ENCODE measurements at regions of chr4 and their contacts with region 1.

Region 1: GRCh38 chr4:139015269-139015947 is at the start of gene NOCT:
- DNase-seq: peak; percentile 75 to 98 (median 86)
- ATAC-seq: peak; percentile 90
- H3K4me3 ChIP-seq: peak within 1 kb of the TSS; percentile 74
- H3K4me3 Mint-ChIP-seq: peak within 1 kb of the TSS; percentile 93
- H3K27ac ChIP-seq: peak within 1 kb of the TSS; percentile 78 to 87
- H3K27ac Mint-ChIP-seq: peak within 1 kb of the TSS; percentile 95
- H3K4me1 ChIP-seq: peaks cover 20% of the 10 kb centered on the region
- H3K4me1 Mint-ChIP-seq: peaks cover 26% of the 10 kb centered on the region
- H3K27me3 ChIP-seq: no peaks in the 10 kb centered on the region
- H3K27me3 Mint-ChIP-seq: no peaks in the 10 kb centered on the region
- CTCF ChIP-seq: no peak
- total RNA-seq, gene NOCT: 13.7 to 15.8 TPM

Region 2: DNA sequence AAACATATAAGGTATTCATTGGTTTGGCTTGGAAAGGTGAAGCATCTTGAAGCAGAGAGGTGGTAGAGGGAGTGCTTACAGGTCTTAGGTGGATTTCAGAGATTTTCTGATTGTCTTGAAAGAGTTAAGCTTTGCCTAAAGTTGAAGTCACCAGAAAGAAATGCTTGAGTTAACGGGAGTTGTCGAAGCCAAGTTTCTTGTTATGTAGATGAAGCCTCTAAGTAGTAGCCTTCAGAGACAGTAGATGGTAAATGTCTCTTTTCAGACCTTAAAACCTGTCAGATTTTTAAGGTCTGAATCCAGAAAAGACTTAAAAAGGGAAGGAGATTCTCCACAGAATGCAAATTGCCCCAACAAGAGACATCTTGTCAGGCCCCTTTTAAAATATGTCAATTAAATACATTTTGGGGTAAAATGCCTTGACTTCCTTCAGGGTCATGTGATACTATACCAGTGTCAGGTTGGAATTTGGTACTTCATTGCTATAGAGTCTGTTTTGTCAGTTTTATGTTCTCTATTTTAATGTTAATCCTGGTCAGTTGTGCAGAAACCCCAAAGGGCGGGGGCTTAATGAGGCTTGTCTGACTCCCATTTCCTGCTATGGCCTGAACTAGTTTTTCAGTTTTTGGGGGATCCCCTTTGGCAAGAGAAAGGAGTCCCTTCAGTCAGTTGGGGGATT is 1564.1 kb before region 1 on chr4:
- CTCF ChIA-PET with region 1: no interaction called
- POLR2A ChIA-PET with region 1: no interaction called
- intact Hi-C with region 1: no loop called
- DNase-seq: no peak
- ATAC-seq: no peak
- H3K4me3 ChIP-seq: no peak overlapping the region
- H3K4me3 Mint-ChIP-seq: no peak overlapping the region
- H3K27ac ChIP-seq: no peak overlapping the region
- H3K27ac Mint-ChIP-seq: no peak overlapping the region
- H3K4me1 ChIP-seq: no peaks in the 10 kb centered on the region
- H3K4me1 Mint-ChIP-seq: no peaks in the 10 kb centered on the region
- H3K27me3 ChIP-seq: no peaks in the 10 kb centered on the region
- H3K27me3 Mint-ChIP-seq: no peaks in the 10 kb centered on the region
- CTCF ChIP-seq: no peak

Region 3: DNA sequence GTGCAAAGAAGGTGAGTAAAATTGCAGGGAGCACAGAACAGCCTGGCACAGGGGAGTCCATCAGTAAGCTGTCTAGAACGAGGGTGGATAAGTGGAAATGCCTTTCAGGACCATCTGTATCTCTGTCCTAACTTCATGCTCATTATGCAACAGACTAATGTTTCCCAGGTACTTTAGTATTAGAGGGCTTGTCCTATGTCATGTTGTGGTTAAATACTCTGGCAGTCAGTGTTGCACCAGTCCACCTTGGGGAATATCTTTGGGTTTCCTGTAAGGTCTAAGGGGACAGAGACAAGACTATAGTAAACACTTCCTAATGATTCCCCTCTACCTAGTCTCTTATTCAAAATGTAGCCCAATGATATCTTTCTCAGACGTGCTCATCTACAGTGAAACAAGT is 21.5 kb after region 1 on chr4:
- CTCF ChIA-PET with region 1: no interaction called
- POLR2A ChIA-PET with region 1: no interaction called
- intact Hi-C with region 1: no loop called
- DNase-seq: no peak
- ATAC-seq: no peak
- H3K4me3 ChIP-seq: no peak overlapping the region
- H3K4me3 Mint-ChIP-seq: no peak overlapping the region
- H3K27ac ChIP-seq: no peak overlapping the region
- H3K27ac Mint-ChIP-seq: no peak overlapping the region
- H3K4me1 ChIP-seq: no peaks in the 10 kb centered on the region
- H3K4me1 Mint-ChIP-seq: peaks cover 15% of the 10 kb centered on the region
- H3K27me3 ChIP-seq: no peaks in the 10 kb centered on the region
- H3K27me3 Mint-ChIP-seq: no peaks in the 10 kb centered on the region
- CTCF ChIP-seq: no peak

Region 4: DNA sequence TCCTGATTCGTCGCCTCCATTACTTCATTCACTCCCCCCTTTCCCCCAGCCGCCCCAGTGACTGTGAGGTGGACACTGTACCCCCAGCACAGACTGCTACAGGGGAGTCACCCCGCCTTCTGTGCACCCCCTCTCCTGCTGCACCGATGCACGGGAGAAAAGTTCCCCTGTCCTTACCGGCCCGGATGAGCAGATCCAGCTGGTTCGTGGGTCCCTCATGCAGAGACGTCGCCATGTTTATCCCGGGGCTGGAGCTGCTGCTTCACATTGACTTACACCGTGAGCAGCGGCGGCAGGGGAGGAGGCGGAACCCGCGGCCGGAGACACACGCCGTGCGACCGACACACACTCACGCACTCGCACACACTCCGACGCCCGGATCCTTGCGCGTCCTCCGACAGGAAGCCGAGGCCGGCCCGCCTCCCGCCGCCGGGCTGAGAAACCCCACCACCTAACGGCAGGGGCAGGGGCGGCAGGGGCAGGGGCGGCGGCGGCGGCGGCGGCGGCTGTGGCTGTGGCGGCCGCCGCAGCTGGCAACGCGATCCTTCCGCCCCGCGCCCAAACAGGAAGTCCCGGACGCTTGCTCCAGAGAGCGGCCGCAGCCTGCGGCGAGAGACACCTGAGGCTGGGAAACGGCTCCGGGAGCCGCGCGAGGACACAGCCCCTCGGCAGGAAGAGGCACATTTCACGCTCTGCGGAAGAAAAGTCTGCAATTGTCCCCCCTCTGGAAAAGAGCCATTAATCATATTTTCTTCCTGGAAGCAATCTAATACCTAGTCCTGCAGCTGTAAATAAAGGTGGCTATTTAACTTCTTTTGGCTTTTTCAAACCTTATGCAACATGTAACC is 68.8 kb after region 1 on chr4:
- CTCF ChIA-PET with region 1: interaction called, 3 read pairs
- POLR2A ChIA-PET with region 1: interaction called, 28 read pairs
- intact Hi-C with region 1: loop called in 1 of 2 experiments (anchors 2 kb)
- DNase-seq: peak; percentile 65 to 94 (median 80)
- ATAC-seq: peak; percentile 44
- H3K4me3 ChIP-seq: peak overlapping the region; percentile 93
- H3K4me3 Mint-ChIP-seq: peak overlapping the region; percentile 93
- H3K27ac ChIP-seq: peak overlapping the region; percentile 94 to 96
- H3K27ac Mint-ChIP-seq: peak overlapping the region; percentile 92
- H3K4me1 ChIP-seq: peaks cover 5% of the 10 kb centered on the region
- H3K4me1 Mint-ChIP-seq: peaks cover 55% of the 10 kb centered on the region
- H3K27me3 ChIP-seq: no peaks in the 10 kb centered on the region
- H3K27me3 Mint-ChIP-seq: no peaks in the 10 kb centered on the region
- CTCF ChIP-seq: no peak

Region 5: DNA sequence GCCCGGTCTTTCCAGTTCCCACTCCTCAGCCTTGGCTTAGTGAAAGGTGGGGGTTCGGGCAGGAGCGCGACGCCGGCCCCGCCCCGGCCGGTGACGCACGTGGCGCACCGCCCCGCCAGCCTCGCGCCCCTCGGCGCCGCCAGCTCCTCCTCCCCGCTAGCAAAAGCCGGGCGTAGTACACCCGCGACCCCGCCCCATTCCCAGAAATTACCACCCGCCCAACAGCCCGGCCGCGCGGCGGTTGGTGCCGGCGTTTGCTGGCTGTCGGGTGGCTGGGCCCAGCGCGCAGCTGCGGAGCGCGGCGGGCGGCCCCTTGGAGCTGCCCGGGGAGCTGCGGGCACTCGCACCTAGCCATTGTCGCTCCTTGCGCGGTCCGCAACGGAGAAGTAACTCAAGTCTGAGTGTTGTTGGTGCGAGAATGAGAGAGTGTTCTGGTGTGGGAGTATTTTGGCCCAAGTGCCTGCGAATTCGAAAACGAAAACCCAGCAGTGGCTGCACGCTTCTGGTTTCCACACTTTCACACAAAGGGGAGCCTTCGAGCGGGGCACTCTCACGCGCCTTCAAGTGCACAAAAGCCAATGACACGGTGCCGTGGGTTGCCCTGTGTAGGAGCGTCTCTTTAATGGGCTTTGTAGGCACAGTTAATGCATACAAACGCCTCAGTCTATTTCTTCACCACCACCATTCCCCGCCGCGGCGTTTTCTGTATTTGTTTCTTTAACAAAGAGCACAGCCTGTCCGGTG is 162.6 kb after region 1 on chr4:
- CTCF ChIA-PET with region 1: no interaction called
- POLR2A ChIA-PET with region 1: interaction called, 10 read pairs
- intact Hi-C with region 1: loop called in 1 of 2 experiments (anchors 5 kb)
- DNase-seq: peak; percentile 80 to 96 (median 90)
- ATAC-seq: peak; percentile 74
- H3K4me3 ChIP-seq: peak overlapping the region; percentile 85
- H3K4me3 Mint-ChIP-seq: peak overlapping the region; percentile 96
- H3K27ac ChIP-seq: peak overlapping the region; percentile 77 to 88
- H3K27ac Mint-ChIP-seq: peak overlapping the region; percentile 93
- H3K4me1 ChIP-seq: peaks cover 18% of the 10 kb centered on the region
- H3K4me1 Mint-ChIP-seq: peaks cover 26% of the 10 kb centered on the region
- H3K27me3 ChIP-seq: no peaks in the 10 kb centered on the region
- H3K27me3 Mint-ChIP-seq: no peaks in the 10 kb centered on the region
- CTCF ChIP-seq: no peak

Region 6: GRCh38 chr4:139184129-139184528 is 168.7 kb after region 1 on chr4:
- CTCF ChIA-PET with region 1: no interaction called
- POLR2A ChIA-PET with region 1: interaction called, 10 read pairs
- intact Hi-C with region 1: loop called in 1 of 2 experiments (anchors 5 kb)
- DNase-seq: peak in 3 of 14 experiments; percentile 11 to 20 (median 17)
- ATAC-seq: no peak
- H3K4me3 ChIP-seq: no peak overlapping the region
- H3K4me3 Mint-ChIP-seq: no peak overlapping the region
- H3K27ac ChIP-seq: no peak overlapping the region
- H3K27ac Mint-ChIP-seq: no peak overlapping the region
- H3K4me1 ChIP-seq: peaks cover under 1% of the 10 kb centered on the region
- H3K4me1 Mint-ChIP-seq: no peaks in the 10 kb centered on the region
- H3K27me3 ChIP-seq: peaks cover 0 to 3% of the 10 kb centered on the region in 2 experiments
- H3K27me3 Mint-ChIP-seq: no peaks in the 10 kb centered on the region
- CTCF ChIP-seq: no peak

Region 7: GRCh38 chr4:140523857-140524742 is 1508.7 kb after region 1 on chr4 and contains the start of gene ELMOD2:
- CTCF ChIA-PET with region 1: interaction called, 5 read pairs
- POLR2A ChIA-PET with region 1: no interaction called
- intact Hi-C with region 1: loop called in 1 of 2 experiments (anchors 10 kb)
- DNase-seq: peak; percentile 93 to 99 (median 96)
- ATAC-seq: peak; percentile 99
- H3K4me3 ChIP-seq: peak within 1 kb of the TSS; percentile 65
- H3K4me3 Mint-ChIP-seq: peak within 1 kb of the TSS; percentile 91
- H3K27ac ChIP-seq: peak within 1 kb of the TSS in 1 of 2 donors; percentile 58
- H3K27ac Mint-ChIP-seq: peak within 1 kb of the TSS; percentile 79
- H3K4me1 ChIP-seq: peaks cover 10% of the 10 kb centered on the region
- H3K4me1 Mint-ChIP-seq: peaks cover 26% of the 10 kb centered on the region
- H3K27me3 ChIP-seq: no peaks in the 10 kb centered on the region
- H3K27me3 Mint-ChIP-seq: no peaks in the 10 kb centered on the region
- CTCF ChIP-seq: peak; percentile 82
- total RNA-seq, gene ELMOD2: 12.3 to 14.9 TPM

Measured in CD4-positive, alpha-beta T cell (primary cell).